ENCODE measurements at regions of chr1 and their contacts with region 1.

Region 1: DNA sequence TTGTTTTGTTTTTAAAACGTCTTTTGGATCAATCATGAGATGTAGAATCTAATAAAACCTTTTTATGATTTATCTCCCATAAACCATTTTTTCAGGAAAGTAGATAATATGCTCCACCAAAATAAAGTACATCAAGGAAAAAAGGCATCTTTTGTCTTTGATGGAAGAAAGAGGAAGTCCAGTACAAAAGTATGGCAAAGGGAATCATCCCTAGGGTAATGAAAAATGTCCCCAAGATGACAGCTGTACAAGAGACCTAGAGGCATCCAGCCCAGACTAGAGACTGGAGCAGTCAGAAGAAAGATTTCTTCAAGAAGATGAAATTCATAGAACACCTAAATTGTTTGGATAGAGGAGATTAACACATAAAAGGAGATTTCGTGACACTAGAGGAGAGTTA is 32.3 kb upstream of the GFI1 start:
- DNase-seq: no peak
- ATAC-seq: no peak
- H3K4me3 Mint-ChIP-seq: no peak overlapping the region
- H3K27ac Mint-ChIP-seq: no peak overlapping the region
- H3K4me1 Mint-ChIP-seq: no peaks in the 10 kb centered on the region
- H3K27me3 Mint-ChIP-seq: no peaks in the 10 kb centered on the region
- CTCF ChIP-seq: no peak

Region 2: DNA sequence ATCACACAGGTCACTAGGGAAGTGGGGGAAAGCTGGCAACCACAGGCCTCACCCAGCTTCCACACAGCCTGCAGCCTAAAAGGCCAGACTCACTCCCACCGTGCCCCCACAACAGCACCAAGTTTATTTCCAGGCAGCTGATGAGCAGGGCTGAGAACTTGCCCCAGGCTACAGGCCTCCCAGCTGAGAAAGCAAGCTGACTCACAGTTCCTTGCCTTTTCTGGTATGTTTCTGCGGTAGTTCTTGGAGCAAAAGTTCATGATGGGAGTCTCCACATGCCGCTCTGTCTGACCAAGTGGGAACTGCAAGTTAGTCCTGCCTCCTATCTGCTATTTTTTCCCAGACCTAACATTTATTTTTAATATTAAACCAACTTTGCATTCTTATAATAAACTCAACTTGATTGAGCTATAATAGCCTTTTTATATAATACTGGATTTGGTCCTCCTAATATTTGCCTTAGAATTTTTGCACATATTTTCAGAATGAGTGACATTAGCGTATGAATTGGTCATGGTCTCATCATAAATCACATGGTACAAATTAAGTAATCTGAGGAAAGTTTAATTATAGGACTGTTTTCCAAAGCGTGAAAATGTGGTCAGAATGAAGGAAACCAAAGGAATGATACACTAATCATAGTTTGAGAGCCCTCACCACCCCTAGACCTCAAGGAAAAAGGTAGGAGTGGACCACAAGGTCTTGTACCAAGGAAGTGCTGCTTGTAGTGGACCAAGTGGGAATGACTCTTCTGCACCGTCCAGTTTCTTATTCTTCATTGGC is 189.5 kb before region 1 on chr1:
- CTCF ChIA-PET with region 1: no interaction called
- POLR2A ChIA-PET with region 1: interaction called, 11 read pairs
- intact Hi-C with region 1: no loop called
- DNase-seq: no peak
- ATAC-seq: no peak
- H3K4me3 Mint-ChIP-seq: no peak overlapping the region
- H3K27ac Mint-ChIP-seq: no peak overlapping the region
- H3K4me1 Mint-ChIP-seq: no peaks in the 10 kb centered on the region
- H3K27me3 Mint-ChIP-seq: no peaks in the 10 kb centered on the region
- CTCF ChIP-seq: no peak

Measured in activated B cell treated with CpG ODN at 0.5 μM for 24 hours (primary cell).